CD4-positive, alpha-beta memory T cell (primary cell): ENCODE measurements at regions of chr7 and their contacts with region 1.

Region 1: DNA sequence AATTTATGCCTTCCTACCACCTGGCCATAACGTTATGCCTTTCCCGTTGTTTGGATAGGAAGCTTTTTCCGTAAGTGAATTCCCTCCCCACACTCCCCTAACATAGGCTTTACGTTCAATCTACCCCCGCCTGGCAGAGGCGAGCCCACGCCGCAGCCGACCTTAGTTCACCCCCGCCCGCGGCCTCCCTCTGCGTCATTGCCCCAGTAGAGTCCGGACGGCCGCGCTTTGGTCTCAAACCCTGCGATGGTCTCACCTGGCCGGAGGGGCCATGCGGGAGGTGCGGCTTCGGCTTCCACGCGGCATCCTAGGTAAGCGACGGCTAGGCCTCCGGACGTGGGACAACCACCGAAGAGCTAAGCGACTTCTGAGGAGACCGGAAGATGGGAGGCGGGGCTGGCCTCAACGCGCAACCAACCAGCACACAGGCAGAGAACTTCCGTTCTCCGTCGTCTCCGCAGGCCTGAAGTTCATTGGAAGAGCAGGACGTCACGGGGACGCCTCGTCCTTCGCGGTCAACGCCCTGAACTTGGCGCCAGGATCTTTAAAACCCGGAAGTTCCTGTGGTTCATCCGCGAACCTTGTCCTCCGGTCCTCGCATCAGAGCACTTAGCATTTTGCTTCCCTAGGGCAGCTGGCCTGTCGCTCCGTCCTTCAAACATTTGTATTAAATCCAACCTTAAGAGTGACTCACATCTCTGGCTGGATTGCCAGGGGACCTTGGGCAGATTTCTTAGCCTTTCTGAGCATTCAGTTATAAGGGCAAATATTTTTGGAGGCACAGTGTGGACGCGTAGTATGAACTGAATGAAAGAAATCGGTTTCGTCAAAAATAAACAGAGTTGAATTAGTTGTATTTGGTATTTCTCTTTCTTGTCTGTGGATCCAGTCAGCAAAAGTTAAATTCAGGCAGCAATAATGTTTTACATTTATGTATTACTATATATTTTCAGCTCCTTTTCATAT is at the start of gene CHCHD2:
- DNase-seq: peak; percentile 92 to 98 (median 95)
- H3K4me3 ChIP-seq: peak within 1 kb of the TSS; percentile 71 to 98
- H3K4me3 Mint-ChIP-seq: peak within 1 kb of the TSS; percentile 96 to 99 (median 97)
- H3K27ac ChIP-seq: peak within 1 kb of the TSS; percentile 95
- H3K27ac Mint-ChIP-seq: peak within 1 kb of the TSS; percentile 92 to 99 (median 98)
- H3K4me1 ChIP-seq: peaks cover 28% of the 10 kb centered on the region
- H3K4me1 Mint-ChIP-seq: peaks cover 16 to 46% (median 27%) of the 10 kb centered on the region in 4 donors
- H3K27me3 ChIP-seq: no peaks in the 10 kb centered on the region
- H3K27me3 Mint-ChIP-seq: peaks cover 0 to 2% of the 10 kb centered on the region in 2 donors
- total RNA-seq, gene CHCHD2: 147 to 156 TPM

Region 2: DNA sequence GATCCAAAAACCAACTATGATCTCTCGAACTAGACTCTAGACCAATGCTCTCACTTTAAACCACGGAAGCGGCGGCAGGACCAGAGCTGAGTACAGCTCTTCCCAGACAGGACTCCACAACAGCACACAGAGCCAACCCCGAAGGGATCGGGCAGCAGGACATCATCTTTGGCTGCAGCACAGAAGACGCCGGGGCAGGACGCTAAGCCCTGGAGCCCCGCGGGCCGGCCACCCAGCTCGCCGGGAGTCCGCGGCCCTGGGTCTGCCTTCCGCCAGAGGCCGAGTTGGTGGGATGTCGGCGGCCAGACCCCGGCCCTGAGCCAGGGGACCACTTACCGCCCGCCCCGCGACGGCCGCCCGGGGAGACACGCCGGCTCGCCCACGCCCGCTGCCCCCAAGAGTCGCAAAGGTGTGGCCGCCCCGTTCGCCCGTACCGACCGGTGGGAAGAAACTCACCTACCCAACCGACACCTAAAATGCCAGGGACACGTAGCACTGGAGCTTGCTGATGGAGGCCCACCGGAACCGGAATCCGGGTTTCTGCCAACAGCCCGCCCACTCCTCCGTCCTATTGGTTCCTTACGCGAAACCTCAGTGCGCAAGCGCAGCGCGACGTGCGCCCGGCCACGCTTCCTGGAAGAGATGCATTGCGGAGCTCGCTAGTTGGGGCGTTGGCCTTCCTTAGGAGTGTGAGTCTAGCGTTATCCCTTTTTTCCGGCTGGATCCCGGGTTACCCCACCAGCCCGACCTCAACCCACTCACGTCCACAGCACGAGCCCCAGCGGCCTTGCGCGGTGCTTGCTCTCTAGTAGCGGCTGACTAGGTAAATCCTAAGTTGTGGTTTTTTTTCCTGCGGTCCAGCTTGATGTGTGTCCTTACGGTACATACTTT is 1347.4 kb before region 1 on chr7 and contains the start of gene SEC61G:
- CTCF ChIA-PET with region 1: no interaction called
- POLR2A ChIA-PET with region 1: interaction called, 4 read pairs
- intact Hi-C with region 1: loop called (anchors 1 kb)
- DNase-seq: peak; percentile 95 to 96 (median 95)
- H3K4me3 ChIP-seq: peak within 1 kb of the TSS; percentile 62 to 97
- H3K4me3 Mint-ChIP-seq: peak within 1 kb of the TSS; percentile 99 to 100 (median 100)
- H3K27ac ChIP-seq: peak within 1 kb of the TSS; percentile 81
- H3K27ac Mint-ChIP-seq: peak within 1 kb of the TSS; percentile 95 to 99 (median 98)
- H3K4me1 ChIP-seq: peaks cover 22% of the 10 kb centered on the region
- H3K4me1 Mint-ChIP-seq: peaks cover 15 to 51% (median 32%) of the 10 kb centered on the region in 4 donors
- H3K27me3 ChIP-seq: no peaks in the 10 kb centered on the region
- H3K27me3 Mint-ChIP-seq: no peaks in the 10 kb centered on the region
- total RNA-seq, gene SEC61G: 67.0 to 73.9 TPM

Region 3: GRCh38 chr7:55818686-55819085 is 287.7 kb before region 1 on chr7:
- CTCF ChIA-PET with region 1: no interaction called
- POLR2A ChIA-PET with region 1: no interaction called
- intact Hi-C with region 1: no loop called
- DNase-seq: no peak
- H3K4me3 ChIP-seq: no peak overlapping the region
- H3K4me3 Mint-ChIP-seq: no peak overlapping the region
- H3K27ac ChIP-seq: no peak overlapping the region
- H3K27ac Mint-ChIP-seq: no peak overlapping the region
- H3K4me1 ChIP-seq: no peaks in the 10 kb centered on the region
- H3K4me1 Mint-ChIP-seq: no peaks in the 10 kb centered on the region
- H3K27me3 ChIP-seq: no peaks in the 10 kb centered on the region
- H3K27me3 Mint-ChIP-seq: peaks cover 5 to 9% of the 10 kb centered on the region in 2 donors

Region 4: GRCh38 chr7:55951637-55952351 is 154.6 kb before region 1 on chr7 and contains the start of gene MRPS17:
- CTCF ChIA-PET with region 1: no interaction called
- POLR2A ChIA-PET with region 1: interaction called, 5 read pairs
- intact Hi-C with region 1: loop called (anchors 1 kb)
- DNase-seq: peak; percentile 92 to 95 (median 93)
- H3K4me3 ChIP-seq: peak within 1 kb of the TSS; percentile 88 to 96
- H3K4me3 Mint-ChIP-seq: peak within 1 kb of the TSS; percentile 92 to 97 (median 94)
- H3K27ac ChIP-seq: peak within 1 kb of the TSS; percentile 71
- H3K27ac Mint-ChIP-seq: peak within 1 kb of the TSS; percentile 87 to 99 (median 98)
- H3K4me1 ChIP-seq: peaks cover 12% of the 10 kb centered on the region
- H3K4me1 Mint-ChIP-seq: peaks cover 12 to 32% (median 18%) of the 10 kb centered on the region in 4 donors
- H3K27me3 ChIP-seq: no peaks in the 10 kb centered on the region
- H3K27me3 Mint-ChIP-seq: no peaks in the 10 kb centered on the region
- total RNA-seq, gene MRPS17: 11.5 to 13.2 TPM

Region 5: DNA sequence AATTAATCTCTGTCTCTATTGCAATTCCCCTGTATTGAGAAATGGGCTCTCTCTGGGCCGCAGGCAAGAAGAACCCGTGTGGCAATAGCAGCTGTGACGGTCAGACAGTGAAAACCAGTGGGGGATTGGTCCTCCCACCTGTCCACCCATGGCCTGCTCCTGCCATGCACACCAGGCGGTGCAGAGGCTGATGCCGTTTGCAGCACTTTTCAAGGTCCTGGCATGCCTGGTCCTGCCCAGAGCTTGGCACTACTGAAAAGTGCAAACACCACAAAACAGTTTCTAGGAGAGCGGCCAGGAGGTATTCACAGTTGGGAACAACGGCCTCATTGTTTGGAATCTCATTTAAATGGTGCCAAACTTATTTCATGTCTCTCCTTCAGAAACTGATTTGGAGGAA is 96.7 kb before region 1 on chr7:
- CTCF ChIA-PET with region 1: no interaction called
- POLR2A ChIA-PET with region 1: no interaction called
- intact Hi-C with region 1: loop called (anchors 1 kb)
- DNase-seq: no peak
- H3K4me3 ChIP-seq: no peak overlapping the region
- H3K4me3 Mint-ChIP-seq: no peak overlapping the region
- H3K27ac ChIP-seq: no peak overlapping the region
- H3K27ac Mint-ChIP-seq: peak overlapping the region in 1 of 7 donors; percentile 12
- H3K4me1 ChIP-seq: no peaks in the 10 kb centered on the region
- H3K4me1 Mint-ChIP-seq: no peaks in the 10 kb centered on the region
- H3K27me3 ChIP-seq: no peaks in the 10 kb centered on the region
- H3K27me3 Mint-ChIP-seq: no peaks in the 10 kb centered on the region

Region 6: DNA sequence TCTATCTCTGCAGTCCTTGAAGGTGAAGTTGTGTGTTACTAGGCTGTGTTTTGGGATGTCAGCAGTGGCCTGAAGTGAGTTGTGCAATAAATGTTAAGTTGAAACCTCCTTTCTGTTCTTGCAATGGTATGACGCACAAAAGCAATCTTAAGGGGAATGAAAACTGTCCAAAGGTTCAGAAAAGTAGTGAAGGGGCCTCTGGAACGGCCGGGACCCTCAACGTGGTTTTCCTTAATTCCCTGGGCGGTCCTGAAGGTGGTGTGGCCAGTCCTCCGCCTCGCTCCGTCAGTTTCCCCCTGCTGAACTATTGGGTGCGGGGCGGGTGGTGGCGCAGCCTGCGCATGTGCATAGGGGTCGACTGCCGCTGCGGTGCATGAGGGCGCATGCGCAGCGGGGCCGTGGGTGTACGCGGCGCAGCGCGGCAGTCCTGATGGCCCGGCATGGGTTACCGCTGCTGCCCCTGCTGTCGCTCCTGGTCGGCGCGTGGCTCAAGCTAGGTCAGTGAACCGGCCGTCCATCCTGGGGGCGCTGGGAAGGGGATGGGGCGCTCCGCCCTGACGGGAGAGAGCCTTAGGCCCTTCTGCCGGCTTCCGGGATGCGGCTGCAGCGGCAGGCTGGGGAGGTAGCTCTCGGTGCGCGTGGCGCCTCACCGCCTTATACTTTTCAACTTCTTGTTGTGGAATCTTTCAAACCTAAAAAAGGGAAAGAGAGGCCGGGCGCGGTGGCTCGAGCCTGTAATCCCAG is 42.3 kb before region 1 on chr7 and contains the start of gene SUMF2:
- CTCF ChIA-PET with region 1: interaction called, 3 read pairs
- POLR2A ChIA-PET with region 1: interaction called, 21 read pairs
- intact Hi-C with region 1: loop called (anchors 1 kb)
- DNase-seq: peak; percentile 88 to 95 (median 92)
- H3K4me3 ChIP-seq: peak within 1 kb of the TSS; percentile 81 to 97
- H3K4me3 Mint-ChIP-seq: peak within 1 kb of the TSS; percentile 89 to 95 (median 94)
- H3K27ac ChIP-seq: peak within 1 kb of the TSS; percentile 72
- H3K27ac Mint-ChIP-seq: peak within 1 kb of the TSS; percentile 90 to 98 (median 95)
- H3K4me1 ChIP-seq: peaks cover 22% of the 10 kb centered on the region
- H3K4me1 Mint-ChIP-seq: peaks cover 21 to 38% (median 28%) of the 10 kb centered on the region in 4 donors
- H3K27me3 ChIP-seq: no peaks in the 10 kb centered on the region
- H3K27me3 Mint-ChIP-seq: no peaks in the 10 kb centered on the region
- total RNA-seq, gene SUMF2: 172 to 177 TPM